Activated B cell treated with CpG ODN at 0.5 μM for 24 hours (primary cell): ENCODE measurements at regions of chr7 and their contacts with region 1.

Region 1: DNA sequence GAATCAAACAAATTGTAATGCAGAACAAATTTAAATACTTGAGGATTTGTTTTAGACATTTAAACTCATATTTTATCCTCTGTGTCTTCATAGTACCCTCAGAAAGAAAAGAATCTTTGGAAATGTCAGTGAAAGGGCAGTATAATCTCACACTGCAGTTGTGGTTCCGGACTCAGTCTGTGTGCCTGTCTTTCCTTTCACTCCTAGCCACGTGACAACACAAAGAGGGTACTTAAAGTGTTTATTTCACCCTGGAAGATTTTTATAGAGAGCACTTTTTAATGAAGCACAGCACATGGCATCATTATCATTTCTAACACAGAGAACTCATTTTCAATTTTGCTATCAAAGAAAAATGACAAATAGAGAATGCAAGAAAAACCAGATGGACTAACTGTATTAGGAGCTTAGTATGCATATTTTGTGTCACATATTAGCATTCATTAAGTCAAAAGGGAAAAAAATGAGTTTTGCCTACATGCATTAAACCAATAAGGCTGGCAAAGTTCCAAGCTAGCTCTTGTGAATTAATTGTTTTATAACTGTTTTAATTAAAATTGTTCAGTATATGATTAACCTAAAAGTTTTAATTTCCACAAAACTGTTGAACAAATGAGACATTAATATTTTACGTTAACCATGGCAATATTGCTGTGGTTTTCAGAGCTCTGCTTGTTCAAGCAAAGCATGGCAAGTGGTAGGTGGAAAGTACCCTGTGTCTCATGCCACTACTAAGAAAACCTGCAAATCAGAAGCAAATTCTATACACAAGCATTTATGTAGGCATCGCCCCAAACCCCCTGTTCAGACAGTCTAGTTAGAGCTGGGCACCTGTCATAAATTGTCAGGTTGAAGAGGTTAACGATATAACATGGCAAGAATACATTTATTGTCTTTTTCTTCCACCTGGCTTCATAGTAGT is 65.9 kb downstream of the AUTS2 start:
- DNase-seq: no peak
- ATAC-seq: peak; percentile 91
- H3K4me3 Mint-ChIP-seq: peak overlapping the region; percentile 45
- H3K27ac Mint-ChIP-seq: peak overlapping the region; percentile 76
- H3K4me1 Mint-ChIP-seq: peaks cover 39% of the 10 kb centered on the region
- H3K27me3 Mint-ChIP-seq: no peaks in the 10 kb centered on the region
- CTCF ChIP-seq: no peak

Region 2: DNA sequence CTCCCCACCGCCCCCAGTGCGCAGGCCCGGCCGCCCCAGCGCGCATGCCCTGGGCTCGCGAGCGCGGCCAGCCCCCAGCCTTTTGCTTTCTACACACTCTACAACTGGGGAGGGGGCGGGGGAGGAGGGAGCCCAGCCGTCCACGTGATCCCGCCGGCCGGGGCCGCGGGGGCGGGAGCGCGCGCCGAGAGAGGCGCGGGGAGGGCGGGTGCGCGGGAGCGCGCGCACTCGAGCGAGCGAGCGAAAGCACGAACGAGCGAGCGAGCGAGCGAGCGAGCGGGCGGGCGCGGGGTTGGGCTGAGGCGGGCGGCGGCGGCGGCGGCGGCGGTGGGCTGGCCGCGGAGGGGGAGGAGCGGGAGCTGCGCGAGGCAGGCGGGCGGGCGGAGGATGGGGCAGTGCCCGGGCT is 66.1 kb before region 1 on chr7 and contains the start of gene AUTS2:
- CTCF ChIA-PET with region 1: no interaction called
- POLR2A ChIA-PET with region 1: interaction called, 5 read pairs
- intact Hi-C with region 1: loop called (anchors 2 kb)
- DNase-seq: peak; percentile 78
- ATAC-seq: peak; percentile 75
- H3K4me3 Mint-ChIP-seq: peak within 1 kb of the TSS; percentile 93
- H3K27ac Mint-ChIP-seq: peak within 1 kb of the TSS; percentile 83
- H3K4me1 Mint-ChIP-seq: peaks cover 16% of the 10 kb centered on the region
- H3K27me3 Mint-ChIP-seq: no peaks in the 10 kb centered on the region
- CTCF ChIP-seq: no peak
- total RNA-seq, gene AUTS2: 13.0 and 15.9 TPM in 2 replicates

Region 3: DNA sequence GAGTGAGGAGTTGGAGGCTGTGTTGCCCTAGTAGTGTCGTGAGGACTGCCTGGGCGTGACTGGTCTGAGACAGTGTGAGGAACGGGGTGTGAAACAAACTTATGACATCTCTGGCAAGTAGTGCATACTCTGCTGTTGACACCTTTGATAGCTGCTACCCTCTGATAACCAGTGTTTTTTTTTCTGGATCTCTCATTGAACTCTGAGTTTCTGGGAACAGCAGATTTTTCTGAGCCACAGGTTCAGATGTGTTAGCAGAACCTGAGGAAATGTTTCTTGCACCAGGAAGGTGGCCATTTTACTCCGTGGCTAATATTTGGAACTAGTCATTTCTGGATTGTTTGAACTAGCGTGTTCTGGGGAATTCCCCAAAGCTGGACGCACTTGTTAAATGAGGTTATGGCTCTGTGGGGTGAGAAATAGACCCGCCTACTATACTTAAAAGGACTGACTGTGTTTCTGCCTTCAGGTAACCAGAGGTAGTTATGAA is 13.0 kb before region 1 on chr7:
- CTCF ChIA-PET with region 1: no interaction called
- POLR2A ChIA-PET with region 1: interaction called, 4 read pairs
- intact Hi-C with region 1: loop called (anchors 1 kb)
- DNase-seq: no peak
- ATAC-seq: peak; percentile 85
- H3K4me3 Mint-ChIP-seq: peak overlapping the region; percentile 38
- H3K27ac Mint-ChIP-seq: peak overlapping the region; percentile 32
- H3K4me1 Mint-ChIP-seq: peaks cover 42% of the 10 kb centered on the region
- H3K27me3 Mint-ChIP-seq: no peaks in the 10 kb centered on the region
- CTCF ChIP-seq: no peak

Region 4: DNA sequence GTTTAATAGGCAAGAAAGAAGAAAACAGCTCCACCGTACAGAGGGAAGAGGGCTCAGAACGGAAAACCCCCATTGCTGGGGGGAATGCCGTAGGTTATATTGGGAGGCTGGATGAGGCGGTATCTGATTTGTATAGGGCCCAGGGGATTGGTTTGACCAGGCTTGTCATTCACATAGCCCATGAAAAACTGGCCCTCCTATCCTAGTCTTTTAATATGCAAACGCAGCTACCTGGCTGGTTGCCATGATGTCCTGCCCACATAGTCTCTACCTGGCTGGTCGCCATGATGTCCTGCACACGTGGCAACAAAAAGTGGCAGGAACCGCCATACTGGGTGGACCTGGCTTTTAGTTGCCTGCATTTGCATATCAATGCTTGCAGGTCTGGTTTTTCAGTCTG is 18.8 kb after region 1 on chr7:
- CTCF ChIA-PET with region 1: interaction called, 3 read pairs
- POLR2A ChIA-PET with region 1: no interaction called
- intact Hi-C with region 1: loop called (anchors 2 kb)
- DNase-seq: no peak
- ATAC-seq: peak; percentile 47
- H3K4me3 Mint-ChIP-seq: no peak overlapping the region
- H3K27ac Mint-ChIP-seq: peak overlapping the region; percentile 8
- H3K4me1 Mint-ChIP-seq: peaks cover 11% of the 10 kb centered on the region
- H3K27me3 Mint-ChIP-seq: no peaks in the 10 kb centered on the region
- CTCF ChIP-seq: no peak

Region 5: DNA sequence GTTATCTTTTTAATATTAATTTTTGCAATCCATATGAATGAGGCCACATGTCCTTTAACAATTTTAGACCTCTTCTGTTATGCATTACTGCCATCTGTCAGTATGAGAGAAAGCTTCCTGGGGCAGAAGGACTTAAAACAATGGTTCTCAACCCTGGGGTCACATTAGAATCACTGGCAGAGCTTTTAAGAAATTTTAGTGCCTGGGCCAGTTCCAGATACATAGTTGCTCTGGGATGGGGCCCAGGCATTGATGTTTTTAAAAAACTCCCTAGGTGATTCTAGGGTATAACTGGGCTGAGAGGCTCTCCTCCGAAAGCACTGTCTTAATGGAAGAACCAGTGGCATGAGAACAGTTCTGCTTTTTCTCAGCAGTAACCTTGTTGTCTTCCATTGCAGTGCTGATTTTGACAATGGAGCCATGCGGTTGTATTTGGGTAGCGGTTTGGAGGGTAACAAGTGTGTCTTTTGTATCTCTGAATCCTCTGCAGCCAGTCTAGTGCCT is 161.0 kb after region 1 on chr7:
- CTCF ChIA-PET with region 1: no interaction called
- POLR2A ChIA-PET with region 1: interaction called, 9 read pairs
- intact Hi-C with region 1: loop called (anchors 5 kb)
- DNase-seq: no peak
- ATAC-seq: peak; percentile 18
- H3K4me3 Mint-ChIP-seq: peak overlapping the region; percentile 90
- H3K27ac Mint-ChIP-seq: peak overlapping the region; percentile 96
- H3K4me1 Mint-ChIP-seq: peaks cover 72% of the 10 kb centered on the region
- H3K27me3 Mint-ChIP-seq: no peaks in the 10 kb centered on the region
- CTCF ChIP-seq: no peak

Region 6: GRCh38 chr7:69843653-69844052 is 179.5 kb after region 1 on chr7:
- CTCF ChIA-PET with region 1: no interaction called
- POLR2A ChIA-PET with region 1: no interaction called
- intact Hi-C with region 1: loop called (anchors 5 kb)
- DNase-seq: no peak
- ATAC-seq: peak; percentile 37
- H3K4me3 Mint-ChIP-seq: peak overlapping the region; percentile 12
- H3K27ac Mint-ChIP-seq: peak overlapping the region; percentile 59
- H3K4me1 Mint-ChIP-seq: peaks cover 76% of the 10 kb centered on the region
- H3K27me3 Mint-ChIP-seq: no peaks in the 10 kb centered on the region
- CTCF ChIP-seq: no peak

Region 7: DNA sequence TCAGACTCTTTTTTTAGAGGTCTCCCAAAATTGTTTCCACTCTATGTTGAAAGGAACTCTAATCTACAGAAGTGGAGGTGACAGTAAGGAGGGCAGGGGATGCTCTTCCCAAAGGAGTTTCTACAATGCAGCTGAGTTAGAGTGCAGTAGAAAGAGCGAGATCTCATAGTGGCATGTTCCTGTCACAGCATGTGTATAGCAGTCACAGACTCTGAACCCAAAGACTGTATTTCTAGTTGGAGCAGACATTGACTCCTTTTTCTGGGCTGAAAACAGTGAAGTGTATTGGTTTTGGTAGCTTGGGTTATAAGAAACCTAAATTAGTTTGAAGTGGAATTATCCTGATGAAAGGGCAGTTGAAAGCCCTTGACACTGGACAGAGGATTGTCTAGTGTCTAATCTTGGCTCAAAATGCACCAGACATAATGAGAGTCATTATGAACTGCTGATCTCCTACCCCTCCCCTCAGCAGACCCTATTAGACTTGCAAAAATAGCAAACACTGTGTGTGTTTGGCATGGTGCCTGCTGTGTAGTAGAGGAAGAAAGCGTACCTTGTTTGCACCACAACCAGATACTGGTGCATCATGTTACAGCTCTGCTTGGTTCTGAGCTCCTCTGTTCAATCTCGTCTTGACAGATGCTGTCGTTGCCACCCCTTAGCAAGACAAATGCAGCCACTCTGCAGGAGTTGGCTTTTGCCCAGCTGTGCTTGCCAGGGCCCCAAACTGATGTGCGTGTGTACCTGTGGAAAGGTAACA is 270.2 kb after region 1 on chr7:
- CTCF ChIA-PET with region 1: no interaction called
- POLR2A ChIA-PET with region 1: no interaction called
- intact Hi-C with region 1: no loop called
- DNase-seq: no peak
- ATAC-seq: no peak
- H3K4me3 Mint-ChIP-seq: no peak overlapping the region
- H3K27ac Mint-ChIP-seq: no peak overlapping the region
- H3K4me1 Mint-ChIP-seq: peaks cover 16% of the 10 kb centered on the region
- H3K27me3 Mint-ChIP-seq: no peaks in the 10 kb centered on the region
- CTCF ChIP-seq: no peak